Activated T-helper 1 cell treated with anti-CD3 and anti-CD28 coated beads, Interleukin-12 subunit alpha, Interleukin-12 subunit beta, Interleukin-2, Interleukin-4 antibody, amounts not matched to agents 30 ng/mL and 10 ng/mL and 1 ng/mL, durations not matched to agents 14 hours and 24 hours and 36 hours (primary cell): ENCODE measurements at regions of chr2 and their contacts with region 1.

Region 1: GRCh38 chr2:226649871-226650660 is 149.6 kb downstream of the IRS1 start:
- DNase-seq: peak; percentile 60
- H3K4me3 Mint-ChIP-seq: peak overlapping the region; percentile 59
- H3K27ac Mint-ChIP-seq: peak overlapping the region; percentile 95
- H3K4me1 Mint-ChIP-seq: peaks cover 63% of the 10 kb centered on the region
- H3K27me3 Mint-ChIP-seq: no peaks in the 10 kb centered on the region

Region 2: GRCh38 chr2:226423498-226423960 is 226.5 kb before region 1 on chr2:
- intact Hi-C with region 1: loop called (anchors 1 kb)
- DNase-seq: peak; percentile 51
- H3K4me3 Mint-ChIP-seq: peak overlapping the region; percentile 59
- H3K27ac Mint-ChIP-seq: peak overlapping the region; percentile 4
- H3K4me1 Mint-ChIP-seq: peaks cover 21% of the 10 kb centered on the region
- H3K27me3 Mint-ChIP-seq: peaks cover 18% of the 10 kb centered on the region

Region 3: DNA sequence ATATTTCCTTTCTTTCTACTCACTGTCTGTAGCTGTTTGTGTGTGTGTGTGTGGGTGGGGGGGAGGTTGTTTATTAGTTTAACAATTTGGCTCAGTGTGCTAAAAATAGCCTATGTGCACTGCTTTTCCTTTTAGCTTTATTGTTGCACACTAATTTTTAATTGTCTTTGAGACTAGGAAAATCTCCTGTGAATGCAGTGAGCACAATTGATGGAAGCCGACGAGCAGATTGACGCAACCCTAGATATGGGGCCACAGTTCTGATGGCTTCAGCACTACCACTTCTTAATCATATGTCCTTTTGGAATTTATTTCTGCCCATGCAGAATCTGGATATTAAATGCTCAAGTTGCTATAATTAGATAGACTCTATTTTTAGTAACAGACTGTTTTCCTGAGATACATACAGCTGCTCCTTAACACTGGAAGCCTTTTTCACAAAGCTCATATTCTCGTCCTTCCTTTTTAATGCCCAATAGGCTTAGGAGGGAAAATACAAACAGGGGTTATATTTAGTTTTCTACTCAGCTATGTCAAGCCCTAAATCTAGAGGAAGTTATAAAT is 40.5 kb after region 1 on chr2:
- intact Hi-C with region 1: loop called (anchors 5 kb)
- DNase-seq: no peak
- H3K4me3 Mint-ChIP-seq: no peak overlapping the region
- H3K27ac Mint-ChIP-seq: no peak overlapping the region
- H3K4me1 Mint-ChIP-seq: peaks cover 22% of the 10 kb centered on the region
- H3K27me3 Mint-ChIP-seq: peaks cover 22% of the 10 kb centered on the region

Region 4: DNA sequence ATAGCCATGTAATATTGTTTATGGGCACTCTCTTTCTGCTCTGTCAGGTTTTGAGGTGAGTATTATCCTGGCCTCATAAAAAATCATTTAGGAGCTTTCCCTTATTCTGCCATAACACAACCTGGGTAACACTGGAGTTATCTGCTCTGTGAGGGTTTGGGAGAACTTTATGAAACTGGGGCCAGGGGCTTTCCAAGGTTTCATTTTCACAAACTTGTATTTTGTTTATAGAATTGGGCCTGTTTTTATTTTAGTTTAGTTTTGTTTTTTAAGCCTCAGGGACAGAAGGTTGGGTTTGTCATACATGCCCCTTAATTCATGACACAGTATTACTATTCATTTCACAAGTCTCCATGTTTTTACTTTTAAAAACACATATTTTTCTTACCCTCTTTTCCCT is 66.1 kb after region 1 on chr2:
- intact Hi-C with region 1: loop called (anchors 2 kb)
- DNase-seq: no peak
- H3K4me3 Mint-ChIP-seq: no peak overlapping the region
- H3K27ac Mint-ChIP-seq: peak overlapping the region; percentile 51
- H3K4me1 Mint-ChIP-seq: peaks cover 17% of the 10 kb centered on the region
- H3K27me3 Mint-ChIP-seq: peaks cover 20% of the 10 kb centered on the region

Region 5: DNA sequence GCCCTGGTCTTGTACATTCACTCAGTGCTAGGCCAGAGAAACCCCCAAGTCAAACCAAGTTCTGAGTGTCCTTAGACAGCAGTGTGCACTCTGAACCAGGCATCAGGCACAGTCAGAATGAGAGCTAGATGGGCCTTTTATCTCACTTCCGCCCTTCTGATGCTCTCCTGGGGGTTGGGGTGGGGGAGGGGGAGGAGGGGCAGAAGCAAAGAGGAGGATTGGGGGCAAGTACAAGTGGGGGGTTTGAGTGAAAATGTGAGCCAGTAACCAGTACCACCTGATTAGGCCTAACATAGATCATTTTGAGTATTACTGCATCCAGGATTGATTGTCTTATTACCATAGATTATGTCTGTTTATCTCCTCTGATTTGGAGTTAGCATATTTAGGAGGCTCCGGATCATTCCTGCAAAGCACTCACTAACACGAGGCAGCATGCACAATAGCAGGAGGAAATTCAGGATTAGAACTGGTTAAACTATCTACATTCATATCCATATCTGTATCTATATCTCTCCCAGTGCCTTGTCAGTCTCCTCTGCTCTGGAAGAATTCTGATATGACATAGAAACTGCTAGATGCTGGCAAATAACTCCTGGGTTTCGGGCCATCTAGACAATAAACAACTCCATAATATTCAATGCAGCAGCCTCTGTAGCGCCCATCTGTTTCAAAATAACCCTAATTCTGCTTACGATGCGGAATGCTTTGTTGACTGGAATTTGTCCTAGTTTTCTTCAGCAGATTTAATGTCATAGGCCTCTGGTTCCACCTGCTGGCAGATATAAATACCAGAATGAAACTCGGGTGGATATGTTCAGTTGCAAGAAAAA is 334.9 kb after region 1 on chr2:
- intact Hi-C with region 1: loop called (anchors 10 kb)
- DNase-seq: peak; percentile 9
- H3K4me3 Mint-ChIP-seq: no peak overlapping the region
- H3K27ac Mint-ChIP-seq: no peak overlapping the region
- H3K4me1 Mint-ChIP-seq: peaks cover 21% of the 10 kb centered on the region
- H3K27me3 Mint-ChIP-seq: no peaks in the 10 kb centered on the region

Region 6: GRCh38 chr2:227324995-227325838 is 675.2 kb after region 1 on chr2 and contains the start of gene MFF:
- intact Hi-C with region 1: loop called (anchors 10 kb)
- DNase-seq: peak; percentile 91
- H3K4me3 Mint-ChIP-seq: peak within 1 kb of the TSS; percentile 94
- H3K27ac Mint-ChIP-seq: peak within 1 kb of the TSS; percentile 94
- H3K4me1 Mint-ChIP-seq: peaks cover 42% of the 10 kb centered on the region
- H3K27me3 Mint-ChIP-seq: peaks cover 14% of the 10 kb centered on the region
- total RNA-seq, gene MFF: 69.9 and 74.9 TPM in 2 replicates

Region 7: DNA sequence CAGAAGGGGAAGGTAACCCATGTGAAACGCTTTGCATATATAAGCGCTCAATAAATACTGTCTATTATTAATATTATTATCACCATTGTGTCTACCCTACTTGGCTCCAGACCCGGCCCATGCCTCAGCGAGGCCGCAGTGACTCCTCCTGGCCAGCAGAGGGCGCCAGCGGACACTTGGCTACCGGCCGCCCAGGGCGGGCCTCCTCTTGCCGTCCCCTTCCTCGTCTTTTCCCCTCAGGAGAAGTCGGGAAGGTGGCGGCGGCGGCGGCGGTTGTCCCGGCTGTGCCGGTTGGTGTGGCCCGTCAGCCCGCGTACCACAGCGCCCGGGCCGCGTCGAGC is 821.8 kb after region 1 on chr2 and contains the start of gene AGFG1:
- intact Hi-C with region 1: loop called (anchors 10 kb)
- DNase-seq: peak; percentile 78
- H3K4me3 Mint-ChIP-seq: peak within 1 kb of the TSS; percentile 88
- H3K27ac Mint-ChIP-seq: peak within 1 kb of the TSS; percentile 86
- H3K4me1 Mint-ChIP-seq: peaks cover 56% of the 10 kb centered on the region
- H3K27me3 Mint-ChIP-seq: no peaks in the 10 kb centered on the region
- total RNA-seq, gene AGFG1: 239 and 252 TPM in 2 replicates